ENCODE measurements at regions of chr6 and their contacts with region 1.

Region 1: GRCh38 chr6:135054569-135055498 is at the start of gene HBS1L:
- DNase-seq: peak; percentile 93 to 98 (median 96)
- ATAC-seq: peak; percentile 97
- H3K4me3 ChIP-seq: peak within 1 kb of the TSS; percentile 96
- H3K4me3 Mint-ChIP-seq: peak within 1 kb of the TSS; percentile 89 to 100 (median 97)
- H3K27ac ChIP-seq: peak within 1 kb of the TSS; percentile 97
- H3K27ac Mint-ChIP-seq: peak within 1 kb of the TSS; percentile 97 to 100 (median 98)
- H3K4me1 ChIP-seq: peaks cover 10 to 13% of the 10 kb centered on the region in 2 donors
- H3K4me1 Mint-ChIP-seq: peaks cover 21 to 51% (median 46%) of the 10 kb centered on the region in 7 donors
- H3K27me3 ChIP-seq: no peaks in the 10 kb centered on the region
- H3K27me3 Mint-ChIP-seq: peaks cover 0 to 3% (median 0%) of the 10 kb centered on the region in 5 donors
- total RNA-seq, gene HBS1L: 70.0 to 112 (median 83.1) TPM

Region 2: GRCh38 chr6:134995536-134995935 is 59.3 kb before region 1 on chr6:
- CTCF ChIA-PET with region 1: no interaction called
- POLR2A ChIA-PET with region 1: no interaction called
- intact Hi-C with region 1: no loop called
- DNase-seq: no peak
- ATAC-seq: no peak
- H3K4me3 ChIP-seq: no peak overlapping the region
- H3K4me3 Mint-ChIP-seq: no peak overlapping the region
- H3K27ac ChIP-seq: no peak overlapping the region
- H3K27ac Mint-ChIP-seq: peak overlapping the region in 1 of 9 donors; percentile 34
- H3K4me1 ChIP-seq: no peaks in the 10 kb centered on the region
- H3K4me1 Mint-ChIP-seq: peaks cover 3 to 25% (median 16%) of the 10 kb centered on the region in 7 donors
- H3K27me3 ChIP-seq: no peaks in the 10 kb centered on the region
- H3K27me3 Mint-ChIP-seq: no peaks in the 10 kb centered on the region

Region 3: GRCh38 chr6:135014353-135014832 is 40.4 kb before region 1 on chr6:
- CTCF ChIA-PET with region 1: no interaction called
- POLR2A ChIA-PET with region 1: no interaction called
- intact Hi-C with region 1: loop called (anchors 1 to 2 kb)
- DNase-seq: peak in 7 of 9 donors; percentile 25 to 66 (median 52)
- ATAC-seq: peak; percentile 89
- H3K4me3 ChIP-seq: peak overlapping the region; percentile 8
- H3K4me3 Mint-ChIP-seq: peak overlapping the region; percentile 3 to 83 (median 71)
- H3K27ac ChIP-seq: peak overlapping the region; percentile 62
- H3K27ac Mint-ChIP-seq: peak overlapping the region; percentile 76 to 94 (median 85)
- H3K4me1 ChIP-seq: peaks cover 18 to 51% of the 10 kb centered on the region in 2 donors
- H3K4me1 Mint-ChIP-seq: peaks cover 43 to 85% (median 81%) of the 10 kb centered on the region in 7 donors
- H3K27me3 ChIP-seq: no peaks in the 10 kb centered on the region
- H3K27me3 Mint-ChIP-seq: no peaks in the 10 kb centered on the region

Region 4: GRCh38 chr6:135075018-135075417 is 20.2 kb after region 1 on chr6:
- CTCF ChIA-PET with region 1: no interaction called
- POLR2A ChIA-PET with region 1: interaction called, 8 read pairs
- intact Hi-C with region 1: loop called in 1 of 2 experiments (anchors 2 kb)
- DNase-seq: no peak
- ATAC-seq: no peak
- H3K4me3 ChIP-seq: no peak overlapping the region
- H3K4me3 Mint-ChIP-seq: peak overlapping the region in 1 of 10 donors; percentile 28
- H3K27ac ChIP-seq: no peak overlapping the region
- H3K27ac Mint-ChIP-seq: peak overlapping the region in 1 of 9 donors; percentile 9
- H3K4me1 ChIP-seq: peaks cover 0 to 3% of the 10 kb centered on the region in 2 donors
- H3K4me1 Mint-ChIP-seq: peaks cover 5 to 24% (median 19%) of the 10 kb centered on the region in 7 donors
- H3K27me3 ChIP-seq: no peaks in the 10 kb centered on the region
- H3K27me3 Mint-ChIP-seq: no peaks in the 10 kb centered on the region

Region 5: DNA sequence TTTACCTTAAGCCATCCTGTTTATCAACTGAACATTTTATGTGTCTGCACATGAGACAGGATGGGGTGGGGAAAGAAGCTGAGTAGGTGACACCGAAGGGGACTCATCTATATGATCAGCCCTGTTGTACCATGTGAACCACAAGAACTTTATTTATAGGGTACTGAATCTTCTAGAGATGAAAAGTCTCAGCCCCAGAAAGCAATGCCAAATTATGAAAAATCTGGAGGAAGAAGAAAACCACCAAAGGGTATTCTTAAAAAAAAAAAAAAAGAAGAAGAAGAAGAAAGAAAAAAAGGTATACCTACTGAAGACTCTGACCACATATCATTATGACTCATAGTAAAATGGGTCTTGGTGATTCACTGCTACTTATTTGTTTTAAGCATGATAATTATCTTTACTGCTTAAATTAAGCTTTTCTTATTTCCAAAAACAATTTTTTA is 39.6 kb after region 1 on chr6:
- CTCF ChIA-PET with region 1: interaction called, 4 read pairs
- POLR2A ChIA-PET with region 1: interaction called, 12 read pairs
- intact Hi-C with region 1: loop called in 1 of 2 experiments (anchors 2 kb)
- DNase-seq: peak in 6 of 9 donors; percentile 57 to 75 (median 64)
- ATAC-seq: peak; percentile 88
- H3K4me3 ChIP-seq: no peak overlapping the region
- H3K4me3 Mint-ChIP-seq: peak overlapping the region; percentile 3 to 70 (median 54)
- H3K27ac ChIP-seq: peak overlapping the region; percentile 56
- H3K27ac Mint-ChIP-seq: peak overlapping the region; percentile 80 to 98 (median 90)
- H3K4me1 ChIP-seq: peaks cover 17 to 41% of the 10 kb centered on the region in 2 donors
- H3K4me1 Mint-ChIP-seq: peaks cover 19 to 95% (median 79%) of the 10 kb centered on the region in 7 donors
- H3K27me3 ChIP-seq: no peaks in the 10 kb centered on the region
- H3K27me3 Mint-ChIP-seq: no peaks in the 10 kb centered on the region

Region 6: GRCh38 chr6:135114355-135115145 is 59.7 kb after region 1 on chr6:
- CTCF ChIA-PET with region 1: no interaction called
- POLR2A ChIA-PET with region 1: interaction called, 8 read pairs
- intact Hi-C with region 1: loop called (anchors 1 kb)
- DNase-seq: no peak
- ATAC-seq: no peak
- H3K4me3 ChIP-seq: no peak overlapping the region
- H3K4me3 Mint-ChIP-seq: peak overlapping the region in 8 of 10 donors; percentile 7 to 83 (median 36)
- H3K27ac ChIP-seq: no peak overlapping the region
- H3K27ac Mint-ChIP-seq: peak overlapping the region in 7 of 9 donors; percentile 6 to 92 (median 49)
- H3K4me1 ChIP-seq: peaks cover 19 to 42% of the 10 kb centered on the region in 2 donors
- H3K4me1 Mint-ChIP-seq: peaks cover 26 to 88% (median 76%) of the 10 kb centered on the region in 7 donors
- H3K27me3 ChIP-seq: no peaks in the 10 kb centered on the region
- H3K27me3 Mint-ChIP-seq: peaks cover 0 to 7% (median 0%) of the 10 kb centered on the region in 5 donors

Region 7: DNA sequence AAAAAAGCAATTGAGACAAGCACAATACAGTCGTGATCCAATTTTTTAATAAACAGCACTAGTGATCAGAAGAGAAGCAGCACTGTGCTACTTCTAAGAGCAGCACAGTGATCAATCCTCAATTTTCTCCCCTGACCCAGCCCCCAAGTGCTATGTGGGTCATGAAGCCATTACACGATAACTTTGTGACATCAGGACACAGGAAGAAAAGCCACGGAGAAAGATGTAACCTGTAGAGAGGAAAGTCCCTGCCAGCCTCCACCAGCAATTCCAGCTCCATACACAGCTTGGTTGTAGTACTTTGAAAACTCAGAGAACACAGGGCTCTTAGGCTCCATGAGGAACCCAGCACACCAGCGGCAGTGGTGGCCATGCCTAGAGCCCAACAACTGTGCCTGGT is 81.0 kb after region 1 on chr6:
- CTCF ChIA-PET with region 1: no interaction called
- POLR2A ChIA-PET with region 1: interaction called, 25 read pairs
- intact Hi-C with region 1: loop called in 1 of 2 experiments (anchors 2 kb)
- DNase-seq: peak in 1 of 9 donors; percentile 9
- ATAC-seq: peak; percentile 38
- H3K4me3 ChIP-seq: no peak overlapping the region
- H3K4me3 Mint-ChIP-seq: peak overlapping the region in 1 of 10 donors; percentile 26
- H3K27ac ChIP-seq: no peak overlapping the region
- H3K27ac Mint-ChIP-seq: peak overlapping the region in 4 of 9 donors; percentile 36 to 83 (median 73)
- H3K4me1 ChIP-seq: no peaks in the 10 kb centered on the region
- H3K4me1 Mint-ChIP-seq: peaks cover 14 to 44% (median 34%) of the 10 kb centered on the region in 7 donors
- H3K27me3 ChIP-seq: no peaks in the 10 kb centered on the region
- H3K27me3 Mint-ChIP-seq: peaks cover 0 to 2% (median 0%) of the 10 kb centered on the region in 5 donors

Region 8: GRCh38 chr6:135497412-135498269 is 442.8 kb after region 1 on chr6 and contains the start of gene AHI1:
- CTCF ChIA-PET with region 1: no interaction called
- POLR2A ChIA-PET with region 1: no interaction called
- intact Hi-C with region 1: loop called in 1 of 2 experiments (anchors 1 kb)
- DNase-seq: peak; percentile 65 to 94 (median 85)
- ATAC-seq: peak; percentile 89
- H3K4me3 ChIP-seq: peak within 1 kb of the TSS; percentile 64
- H3K4me3 Mint-ChIP-seq: peak within 1 kb of the TSS in 4 of 10 donors; percentile 32 to 53 (median 37)
- H3K27ac ChIP-seq: peak within 1 kb of the TSS; percentile 95
- H3K27ac Mint-ChIP-seq: no peak within 1 kb of the TSS
- H3K4me1 ChIP-seq: peaks cover 0 to 5% of the 10 kb centered on the region in 2 donors
- H3K4me1 Mint-ChIP-seq: peaks cover 4 to 19% (median 9%) of the 10 kb centered on the region in 7 donors
- H3K27me3 ChIP-seq: no peaks in the 10 kb centered on the region
- H3K27me3 Mint-ChIP-seq: peaks cover 0 to 3% (median 0%) of the 10 kb centered on the region in 5 donors
- total RNA-seq, gene AHI1: 12.5 to 31.3 (median 26.3) TPM